CD4-positive, alpha-beta T cell (primary cell): ENCODE measurements at regions of chr3 and their contacts with region 1.

Region 1: GRCh38 chr3:196969660-196970546 is 1.3 kb upstream of the PIGZ start:
- DNase-seq: peak in 13 of 14 experiments; percentile 37 to 89 (median 56)
- ATAC-seq: peak; percentile 70
- H3K4me3 ChIP-seq: peak overlapping the region; percentile 52
- H3K4me3 Mint-ChIP-seq: peak overlapping the region; percentile 85
- H3K27ac ChIP-seq: no peak overlapping the region
- H3K27ac Mint-ChIP-seq: peak overlapping the region; percentile 51
- H3K4me1 ChIP-seq: peaks cover 11% of the 10 kb centered on the region
- H3K4me1 Mint-ChIP-seq: peaks cover 11% of the 10 kb centered on the region
- H3K27me3 ChIP-seq: peaks cover 0 to 6% of the 10 kb centered on the region in 2 experiments
- H3K27me3 Mint-ChIP-seq: peaks cover 19% of the 10 kb centered on the region
- CTCF ChIP-seq: peak; percentile 61

Region 2: DNA sequence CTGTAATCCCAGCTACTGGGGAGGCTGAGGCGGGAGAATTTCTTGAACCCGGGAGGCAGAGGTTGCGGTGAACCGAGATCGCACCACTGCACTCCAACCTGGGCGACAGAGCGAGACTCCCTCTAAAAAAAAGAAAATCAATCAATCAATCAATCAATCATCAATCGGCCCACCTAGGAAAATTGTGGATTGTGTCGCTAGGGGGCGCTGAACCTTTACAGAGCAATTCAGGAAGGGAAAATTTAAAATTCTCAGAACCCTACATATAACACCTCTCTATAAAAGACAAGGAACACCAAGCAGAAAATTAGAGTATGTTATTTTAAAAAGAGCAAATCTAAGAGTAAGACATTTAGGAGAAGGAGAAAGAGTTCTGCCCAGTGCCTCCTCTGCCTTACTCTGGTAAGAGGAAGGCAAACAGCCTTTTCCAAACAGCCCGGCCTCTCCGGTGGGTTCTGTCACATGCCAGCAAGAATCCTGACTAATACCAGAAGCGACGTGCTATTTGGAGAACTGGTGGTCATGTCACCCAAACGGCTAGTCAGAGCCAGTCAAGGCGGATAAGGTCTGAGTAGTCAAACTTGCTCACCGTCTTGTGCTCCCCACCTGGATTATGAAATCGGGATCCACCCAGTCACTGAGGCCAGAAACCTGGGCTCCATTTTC is 432.5 kb before region 1 on chr3:
- CTCF ChIA-PET with region 1: no interaction called
- POLR2A ChIA-PET with region 1: no interaction called
- intact Hi-C with region 1: loop called in 1 of 2 experiments (anchors 1 kb)
- DNase-seq: peak; percentile 43 to 83 (median 63)
- ATAC-seq: no peak
- H3K4me3 ChIP-seq: no peak overlapping the region
- H3K4me3 Mint-ChIP-seq: no peak overlapping the region
- H3K27ac ChIP-seq: no peak overlapping the region
- H3K27ac Mint-ChIP-seq: no peak overlapping the region
- H3K4me1 ChIP-seq: peaks cover 3% of the 10 kb centered on the region
- H3K4me1 Mint-ChIP-seq: no peaks in the 10 kb centered on the region
- H3K27me3 ChIP-seq: no peaks in the 10 kb centered on the region
- H3K27me3 Mint-ChIP-seq: no peaks in the 10 kb centered on the region
- CTCF ChIP-seq: peak; percentile 91

Region 3: GRCh38 chr3:196837819-196838420 is 132.0 kb before region 1 on chr3:
- CTCF ChIA-PET with region 1: interaction called, 7 read pairs
- POLR2A ChIA-PET with region 1: no interaction called
- intact Hi-C with region 1: loop called (anchors 1 kb)
- DNase-seq: peak; percentile 54 to 87 (median 68)
- ATAC-seq: peak; percentile 95
- H3K4me3 ChIP-seq: no peak overlapping the region
- H3K4me3 Mint-ChIP-seq: no peak overlapping the region
- H3K27ac ChIP-seq: no peak overlapping the region
- H3K27ac Mint-ChIP-seq: peak overlapping the region; percentile 8
- H3K4me1 ChIP-seq: no peaks in the 10 kb centered on the region
- H3K4me1 Mint-ChIP-seq: no peaks in the 10 kb centered on the region
- H3K27me3 ChIP-seq: no peaks in the 10 kb centered on the region
- H3K27me3 Mint-ChIP-seq: no peaks in the 10 kb centered on the region
- CTCF ChIP-seq: peak; percentile 76